Heart right ventricle (tissue), 16 donors: ENCODE measurements at regions of chr6 and their contacts with region 1.

Region 1: DNA sequence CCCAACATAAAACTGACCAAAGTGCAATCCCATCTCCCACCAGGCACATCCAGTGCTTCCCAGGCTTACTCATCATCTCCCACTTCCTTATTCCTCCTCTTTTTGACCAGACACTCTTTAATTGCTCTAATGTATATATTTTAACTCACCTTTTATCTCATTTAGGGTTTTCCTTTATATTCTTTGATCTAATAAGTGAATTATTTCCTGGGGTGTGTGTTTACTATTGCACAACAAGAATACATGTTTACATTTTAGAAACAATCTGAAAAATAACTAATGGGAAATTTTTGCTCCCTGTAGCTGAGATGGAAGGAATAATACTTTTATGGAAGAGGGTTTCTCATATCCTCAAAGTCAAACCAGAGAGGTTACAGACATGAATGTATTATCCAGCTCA is 18.4 kb downstream of the RHAG start:
- DNase-seq: no peak
- ATAC-seq: no peak
- H3K4me3 ChIP-seq: no peak overlapping the region
- H3K27ac ChIP-seq: no peak overlapping the region
- H3K4me1 ChIP-seq: no peaks in the 10 kb centered on the region
- H3K27me3 ChIP-seq: no peaks in the 10 kb centered on the region
- CTCF ChIP-seq: no peak

Region 2: GRCh38 chr6:49225471-49225870 is 392.8 kb before region 1 on chr6:
- intact Hi-C with region 1: no loop called
- DNase-seq: no peak
- ATAC-seq: no peak
- H3K4me3 ChIP-seq: no peak overlapping the region
- H3K27ac ChIP-seq: no peak overlapping the region
- H3K4me1 ChIP-seq: no peaks in the 10 kb centered on the region
- H3K27me3 ChIP-seq: no peaks in the 10 kb centered on the region
- CTCF ChIP-seq: no peak

Region 3: GRCh38 chr6:49519660-49520059 is 98.6 kb before region 1 on chr6:
- intact Hi-C with region 1: loop called in 1 of 10 experiments (anchors 10 kb)
- DNase-seq: no peak
- ATAC-seq: no peak
- H3K4me3 ChIP-seq: no peak overlapping the region
- H3K27ac ChIP-seq: no peak overlapping the region
- H3K4me1 ChIP-seq: no peaks in the 10 kb centered on the region
- H3K27me3 ChIP-seq: peaks cover 0 to 10% (median 0%) of the 10 kb centered on the region in 7 donors
- CTCF ChIP-seq: no peak